Activated B cell treated with CpG ODN at 0.5 μM for 24 hours (primary cell): ENCODE measurements at regions of chr19 and their contacts with region 1.

Region 1: DNA sequence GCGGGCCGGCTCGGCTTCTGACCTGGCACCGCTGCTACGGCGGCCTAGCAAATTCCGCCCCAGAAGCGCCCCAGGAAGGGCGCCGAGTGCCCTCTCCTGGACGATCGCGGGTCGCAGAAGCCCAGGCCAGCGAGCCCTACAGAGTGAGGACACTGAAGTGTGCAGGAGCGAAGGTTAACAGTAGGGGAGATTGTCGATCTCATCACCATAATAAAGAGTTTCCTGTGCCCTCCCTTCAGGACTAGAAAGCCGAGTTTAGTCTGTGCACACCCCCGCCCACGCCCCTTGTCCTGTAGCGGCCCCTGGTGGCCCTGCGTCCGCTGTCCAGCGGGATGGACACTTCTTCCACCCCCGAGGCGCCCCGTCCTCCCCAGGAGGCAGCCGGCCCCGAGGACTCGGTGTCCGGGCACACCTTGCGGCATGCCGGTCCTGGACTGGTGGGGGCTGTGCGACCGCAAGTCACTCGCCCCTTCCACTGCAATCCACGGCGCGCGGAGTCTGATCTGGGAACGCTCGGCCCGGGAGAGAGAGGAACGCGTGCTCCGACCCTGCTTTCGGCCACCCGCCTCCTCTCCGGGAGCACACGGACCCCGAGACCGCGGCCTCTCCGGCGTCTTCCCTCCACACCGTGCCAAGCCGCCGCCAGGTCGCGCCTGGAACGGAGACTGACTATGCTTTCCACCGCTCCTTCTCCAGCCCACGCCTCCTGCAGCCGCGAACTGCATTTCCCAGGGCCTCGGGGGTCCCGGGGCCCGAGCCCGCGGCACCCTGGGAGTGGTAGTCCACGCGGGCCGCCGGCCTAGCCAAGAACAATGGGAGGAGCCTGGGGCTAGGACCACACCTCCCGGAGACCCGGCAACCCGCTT is 769 bp upstream of the KMT2B start:
- DNase-seq: peak; percentile 75
- ATAC-seq: peak; percentile 79
- H3K4me3 Mint-ChIP-seq: peak overlapping the region; percentile 93
- H3K27ac Mint-ChIP-seq: peak overlapping the region; percentile 97
- H3K4me1 Mint-ChIP-seq: peaks cover 69% of the 10 kb centered on the region
- H3K27me3 Mint-ChIP-seq: no peaks in the 10 kb centered on the region
- CTCF ChIP-seq: no peak

Region 2: GRCh38 chr19:35330475-35330874 is 386.6 kb before region 1 on chr19:
- CTCF ChIA-PET with region 1: no interaction called
- POLR2A ChIA-PET with region 1: no interaction called
- intact Hi-C with region 1: loop called (anchors 10 kb)
- DNase-seq: peak; percentile 76
- ATAC-seq: peak; percentile 81
- H3K4me3 Mint-ChIP-seq: peak overlapping the region; percentile 90
- H3K27ac Mint-ChIP-seq: peak overlapping the region; percentile 94
- H3K4me1 Mint-ChIP-seq: peaks cover 85% of the 10 kb centered on the region
- H3K27me3 Mint-ChIP-seq: no peaks in the 10 kb centered on the region
- CTCF ChIP-seq: no peak

Region 3: DNA sequence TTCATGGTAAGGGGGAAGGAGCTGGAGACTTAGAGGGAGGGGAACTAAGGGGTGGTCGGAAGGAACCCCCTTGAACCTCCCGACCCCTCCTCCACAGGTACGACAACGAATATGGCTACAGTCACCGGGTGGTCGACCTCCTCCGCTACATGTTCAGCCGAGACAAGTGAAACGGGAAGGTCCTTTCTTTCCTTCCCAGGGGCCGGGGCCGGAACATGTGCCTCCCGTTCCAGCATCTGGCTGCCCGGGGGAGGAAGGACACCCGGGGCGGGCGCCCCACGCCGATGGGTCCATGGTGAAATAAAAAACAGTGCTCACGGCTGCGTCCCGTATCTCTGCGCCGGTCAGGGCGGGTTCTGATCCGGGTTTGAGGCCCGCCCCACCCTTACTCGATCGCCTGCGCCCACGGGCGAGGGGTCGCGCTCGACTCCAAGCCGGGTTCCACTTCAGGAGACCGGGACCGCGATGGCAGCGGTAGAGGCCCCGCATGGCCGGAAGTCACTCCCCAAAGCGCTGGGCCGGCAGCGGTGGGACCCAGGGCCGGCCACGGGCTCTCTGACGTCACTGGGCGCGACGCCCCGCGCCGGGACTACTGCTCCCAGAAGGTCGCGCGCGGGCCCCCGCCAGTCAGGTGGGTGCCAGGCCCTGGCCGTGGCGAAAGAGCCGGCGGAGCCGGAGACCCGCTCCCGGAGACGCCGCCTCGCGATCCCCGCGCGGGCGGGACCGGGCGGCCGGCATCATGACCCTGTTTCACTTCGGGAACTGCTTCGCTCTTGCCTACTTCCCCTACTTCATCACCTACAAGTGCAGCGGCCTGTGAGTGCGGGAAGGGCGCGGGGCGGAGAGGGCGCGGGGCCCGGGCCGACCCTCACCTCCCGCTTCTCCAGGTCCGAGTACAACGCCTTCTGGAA is 171.8 kb before region 1 on chr19 and contains the start of gene TMEM147:
- CTCF ChIA-PET with region 1: no interaction called
- POLR2A ChIA-PET with region 1: no interaction called
- intact Hi-C with region 1: loop called (anchors 1 kb)
- DNase-seq: peak; percentile 84
- ATAC-seq: peak; percentile 89
- H3K4me3 Mint-ChIP-seq: peak within 1 kb of the TSS; percentile 88
- H3K27ac Mint-ChIP-seq: peak within 1 kb of the TSS; percentile 79
- H3K4me1 Mint-ChIP-seq: peaks cover 44% of the 10 kb centered on the region
- H3K27me3 Mint-ChIP-seq: no peaks in the 10 kb centered on the region
- CTCF ChIP-seq: no peak
- total RNA-seq, gene TMEM147: 46.9 and 55.3 TPM in 2 replicates

Region 4: GRCh38 chr19:35648017-35648961 is 68.7 kb before region 1 on chr19 and contains the start of gene COX6B1:
- CTCF ChIA-PET with region 1: no interaction called
- POLR2A ChIA-PET with region 1: interaction called, 6 read pairs
- intact Hi-C with region 1: loop called (anchors 1 kb)
- DNase-seq: peak; percentile 72
- ATAC-seq: peak; percentile 66
- H3K4me3 Mint-ChIP-seq: peak within 1 kb of the TSS; percentile 96
- H3K27ac Mint-ChIP-seq: peak within 1 kb of the TSS; percentile 87
- H3K4me1 Mint-ChIP-seq: peaks cover 37% of the 10 kb centered on the region
- H3K27me3 Mint-ChIP-seq: no peaks in the 10 kb centered on the region
- CTCF ChIP-seq: no peak
- total RNA-seq, gene COX6B1: 334 and 401 TPM in 2 replicates

Region 5: GRCh38 chr19:35702223-35703012 is 14.6 kb before region 1 on chr19:
- CTCF ChIA-PET with region 1: interaction called, 57 read pairs
- POLR2A ChIA-PET with region 1: interaction called, 238 read pairs
- intact Hi-C with region 1: loop called (anchors 1 kb)
- DNase-seq: peak; percentile 82
- ATAC-seq: peak; percentile 99
- H3K4me3 Mint-ChIP-seq: peak overlapping the region; percentile 98
- H3K27ac Mint-ChIP-seq: peak overlapping the region; percentile 96
- H3K4me1 Mint-ChIP-seq: peaks cover 7% of the 10 kb centered on the region
- H3K27me3 Mint-ChIP-seq: no peaks in the 10 kb centered on the region
- CTCF ChIP-seq: no peak

Region 6: DNA sequence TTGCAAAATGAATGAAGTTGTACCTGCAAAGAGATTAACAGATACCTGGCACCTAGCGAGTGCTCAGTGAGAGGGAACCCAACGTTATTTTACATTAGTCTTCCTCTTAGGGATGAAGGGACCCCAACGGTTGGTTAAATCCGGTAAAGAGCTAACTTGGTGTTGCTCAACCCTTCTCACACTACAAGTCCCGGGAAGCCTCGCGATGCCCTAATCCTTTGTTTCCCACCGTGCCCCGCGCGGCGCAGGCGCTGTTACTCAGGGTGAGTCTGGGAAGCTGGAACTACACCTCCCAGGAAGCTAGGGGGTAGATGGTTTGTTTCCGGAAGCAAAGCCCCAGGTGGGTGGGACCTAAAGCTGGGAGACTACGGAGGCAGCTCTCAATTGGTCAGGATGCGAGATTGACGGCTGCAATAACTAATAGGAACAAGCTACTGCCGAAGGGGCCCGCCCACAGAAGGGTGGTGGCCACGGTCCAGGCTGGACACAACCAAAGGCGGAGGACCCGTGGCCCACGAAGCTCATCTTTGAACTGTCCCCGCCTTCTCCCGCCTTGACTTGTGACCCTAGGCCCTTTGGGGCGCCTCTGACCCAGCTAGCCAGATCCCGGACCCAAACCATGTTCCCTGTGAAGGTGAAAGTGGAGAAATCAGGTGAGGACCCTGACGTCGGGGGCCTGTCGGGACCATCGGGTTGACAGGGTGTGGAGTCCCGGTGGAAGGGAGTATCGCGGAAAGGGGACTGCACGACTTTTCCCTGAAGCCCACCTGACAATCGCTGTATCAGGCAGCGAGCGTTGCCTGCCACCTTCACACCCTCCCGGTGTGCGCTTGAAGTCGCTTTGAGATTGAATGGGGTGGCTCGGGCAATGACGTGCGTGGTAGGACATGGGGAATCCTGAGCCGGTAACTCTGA is 31.3 kb after region 1 on chr19 and contains the start of gene LIN37:
- CTCF ChIA-PET with region 1: no interaction called
- POLR2A ChIA-PET with region 1: interaction called, 29 read pairs
- intact Hi-C with region 1: loop called (anchors 1 kb)
- DNase-seq: peak; percentile 91
- ATAC-seq: peak; percentile 73
- H3K4me3 Mint-ChIP-seq: peak within 1 kb of the TSS; percentile 98
- H3K27ac Mint-ChIP-seq: peak within 1 kb of the TSS; percentile 96
- H3K4me1 Mint-ChIP-seq: peaks cover 48% of the 10 kb centered on the region
- H3K27me3 Mint-ChIP-seq: no peaks in the 10 kb centered on the region
- CTCF ChIP-seq: no peak
- total RNA-seq, gene LIN37: 12.2 and 14.3 TPM in 2 replicates

Region 7: GRCh38 chr19:35899547-35900214 is 182.6 kb after region 1 on chr19:
- CTCF ChIA-PET with region 1: no interaction called
- POLR2A ChIA-PET with region 1: interaction called, 6 read pairs
- intact Hi-C with region 1: loop called (anchors 2 kb)
- DNase-seq: peak; percentile 93
- ATAC-seq: peak; percentile 57
- H3K4me3 Mint-ChIP-seq: peak overlapping the region; percentile 95
- H3K27ac Mint-ChIP-seq: peak overlapping the region; percentile 95
- H3K4me1 Mint-ChIP-seq: peaks cover 77% of the 10 kb centered on the region
- H3K27me3 Mint-ChIP-seq: no peaks in the 10 kb centered on the region
- CTCF ChIP-seq: no peak

Region 8: DNA sequence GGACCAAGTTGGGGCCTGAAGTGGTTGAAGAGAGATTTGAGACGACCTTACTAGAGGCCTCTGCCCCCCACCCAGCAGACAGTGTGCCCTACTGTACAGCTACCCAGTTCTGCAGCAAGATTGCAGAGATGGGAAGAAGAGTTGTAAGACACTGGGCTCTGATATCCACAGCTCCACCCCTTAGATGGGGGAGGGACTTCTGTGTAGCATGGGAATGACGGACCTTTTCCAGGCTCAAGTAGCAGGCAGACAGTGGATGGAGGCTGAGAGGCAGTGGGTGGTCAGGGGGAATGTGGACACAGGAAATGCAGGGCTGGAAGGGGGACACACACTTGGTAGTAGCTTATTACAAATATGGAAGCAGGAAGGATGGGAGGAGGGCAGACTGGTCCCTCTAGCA is 232.1 kb after region 1 on chr19:
- CTCF ChIA-PET with region 1: no interaction called
- POLR2A ChIA-PET with region 1: no interaction called
- intact Hi-C with region 1: no loop called
- DNase-seq: no peak
- ATAC-seq: no peak
- H3K4me3 Mint-ChIP-seq: no peak overlapping the region
- H3K27ac Mint-ChIP-seq: no peak overlapping the region
- H3K4me1 Mint-ChIP-seq: peaks cover 15% of the 10 kb centered on the region
- H3K27me3 Mint-ChIP-seq: peaks cover 4% of the 10 kb centered on the region
- CTCF ChIP-seq: no peak

Region 9: DNA sequence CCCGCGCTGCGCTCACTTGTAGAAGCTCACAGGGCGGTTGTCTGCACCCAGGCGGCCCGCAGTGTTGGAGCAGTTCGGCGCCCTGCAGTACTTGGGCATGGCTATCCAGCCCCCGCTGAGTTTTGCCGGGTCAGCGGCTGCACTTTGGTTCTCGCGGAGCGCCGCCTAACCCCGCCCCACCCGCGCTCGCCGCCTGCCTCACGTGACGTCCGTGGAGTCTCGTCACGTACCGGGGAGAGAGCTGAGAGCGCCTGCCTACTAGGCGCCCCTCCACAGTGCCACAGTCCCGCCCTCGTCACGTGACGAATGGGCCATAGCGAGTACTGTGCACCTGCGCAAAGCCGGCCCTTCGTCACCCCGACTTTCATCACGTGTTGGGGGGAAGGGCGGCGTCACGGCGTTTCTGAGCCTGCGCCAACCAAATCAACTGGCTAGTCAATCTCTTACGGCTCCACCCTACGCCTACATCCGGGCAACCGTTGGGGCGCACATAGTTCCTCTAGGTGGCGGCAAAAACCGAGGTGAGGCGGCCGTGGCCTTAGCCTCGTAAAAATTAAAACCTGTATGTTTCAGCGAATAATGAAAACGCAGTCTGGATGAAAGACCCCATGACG is 337.2 kb after region 1 on chr19 and contains the start of gene THAP8:
- CTCF ChIA-PET with region 1: no interaction called
- POLR2A ChIA-PET with region 1: no interaction called
- intact Hi-C with region 1: no loop called
- DNase-seq: peak; percentile 98
- ATAC-seq: peak; percentile 83
- H3K4me3 Mint-ChIP-seq: peak within 1 kb of the TSS; percentile 93
- H3K27ac Mint-ChIP-seq: peak within 1 kb of the TSS; percentile 93
- H3K4me1 Mint-ChIP-seq: peaks cover 18% of the 10 kb centered on the region
- H3K27me3 Mint-ChIP-seq: no peaks in the 10 kb centered on the region
- CTCF ChIP-seq: no peak
- total RNA-seq, gene THAP8: 2.3 and 2.4 TPM in 2 replicates